A673 (cell line): ENCODE measurements at regions of chr2 and their contacts with region 1.

Region 1: GRCh38 chr2:74587664-74588277 is 33.3 kb downstream of the DOK1 start:
- DNase-seq: peak; percentile 79
- H3K4me3 ChIP-seq: no peak overlapping the region
- H3K27ac ChIP-seq: no peak overlapping the region
- H3K4me1 ChIP-seq: peaks cover 14% of the 10 kb centered on the region
- H3K27me3 ChIP-seq: no peaks in the 10 kb centered on the region
- CTCF ChIP-seq: peak; percentile 76

Region 2: DNA sequence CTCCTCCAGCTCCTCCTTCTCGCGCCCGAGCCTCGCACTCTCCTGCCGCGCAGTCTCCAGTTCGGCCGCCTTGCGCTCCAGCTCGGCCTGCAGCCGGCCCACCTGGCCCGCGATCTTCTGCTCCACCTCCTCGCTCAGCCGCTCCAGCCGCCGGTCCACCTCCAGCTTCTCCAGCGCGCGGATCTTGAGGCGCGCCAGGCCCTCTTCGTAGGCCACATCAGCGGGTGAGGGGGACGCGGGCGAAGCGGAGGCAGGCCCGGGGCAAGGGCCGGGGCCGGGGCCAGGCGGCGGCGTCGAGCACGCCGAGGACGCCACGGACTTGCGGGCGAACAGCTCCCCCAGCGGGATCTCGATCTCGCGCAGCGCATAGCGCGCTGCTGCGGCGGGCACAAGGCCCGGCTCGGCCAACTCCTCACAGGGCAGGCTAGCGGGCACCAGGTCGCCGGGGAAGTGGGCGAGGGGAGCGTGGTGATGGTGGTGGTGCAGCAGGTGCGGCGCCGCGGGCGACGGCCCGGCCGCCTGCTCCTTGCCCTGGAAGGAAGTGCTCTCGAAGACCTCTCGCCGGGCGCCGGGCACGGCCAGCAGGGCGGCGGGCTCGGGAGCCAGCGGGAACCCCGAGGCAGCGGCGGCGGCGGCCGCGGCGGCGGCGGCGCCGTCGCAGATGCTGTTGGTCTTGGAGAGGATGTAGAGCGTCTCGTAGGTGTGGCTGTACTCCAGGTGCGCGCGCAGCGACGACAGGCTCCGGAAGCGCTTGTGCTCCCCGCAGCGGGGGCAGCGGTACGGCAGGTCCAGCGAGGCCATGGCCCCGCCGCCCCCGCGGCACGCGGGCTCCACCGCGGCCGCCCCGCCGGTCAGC is 1318.7 kb before region 1 on chr2:
- CTCF ChIA-PET with region 1: no interaction called
- POLR2A ChIA-PET with region 1: no interaction called
- intact Hi-C with region 1: no loop called
- DNase-seq: no peak
- H3K4me3 ChIP-seq: no peak overlapping the region
- H3K27ac ChIP-seq: no peak overlapping the region
- H3K4me1 ChIP-seq: no peaks in the 10 kb centered on the region
- H3K27me3 ChIP-seq: no peaks in the 10 kb centered on the region
- CTCF ChIP-seq: no peak

Region 3: GRCh38 chr2:74250189-74250631 is 337.6 kb before region 1 on chr2:
- CTCF ChIA-PET with region 1: no interaction called
- POLR2A ChIA-PET with region 1: no interaction called
- intact Hi-C with region 1: loop called (anchors 2 kb)
- DNase-seq: peak; percentile 47
- H3K4me3 ChIP-seq: no peak overlapping the region
- H3K27ac ChIP-seq: no peak overlapping the region
- H3K4me1 ChIP-seq: no peaks in the 10 kb centered on the region
- H3K27me3 ChIP-seq: no peaks in the 10 kb centered on the region
- CTCF ChIP-seq: peak; percentile 83

Region 4: GRCh38 chr2:74414881-74415761 is 172.7 kb before region 1 on chr2:
- CTCF ChIA-PET with region 1: no interaction called
- POLR2A ChIA-PET with region 1: no interaction called
- intact Hi-C with region 1: no loop called
- DNase-seq: no peak
- H3K4me3 ChIP-seq: peak overlapping the region; percentile 12
- H3K27ac ChIP-seq: no peak overlapping the region
- H3K4me1 ChIP-seq: no peaks in the 10 kb centered on the region
- H3K27me3 ChIP-seq: no peaks in the 10 kb centered on the region
- CTCF ChIP-seq: no peak

Region 5: DNA sequence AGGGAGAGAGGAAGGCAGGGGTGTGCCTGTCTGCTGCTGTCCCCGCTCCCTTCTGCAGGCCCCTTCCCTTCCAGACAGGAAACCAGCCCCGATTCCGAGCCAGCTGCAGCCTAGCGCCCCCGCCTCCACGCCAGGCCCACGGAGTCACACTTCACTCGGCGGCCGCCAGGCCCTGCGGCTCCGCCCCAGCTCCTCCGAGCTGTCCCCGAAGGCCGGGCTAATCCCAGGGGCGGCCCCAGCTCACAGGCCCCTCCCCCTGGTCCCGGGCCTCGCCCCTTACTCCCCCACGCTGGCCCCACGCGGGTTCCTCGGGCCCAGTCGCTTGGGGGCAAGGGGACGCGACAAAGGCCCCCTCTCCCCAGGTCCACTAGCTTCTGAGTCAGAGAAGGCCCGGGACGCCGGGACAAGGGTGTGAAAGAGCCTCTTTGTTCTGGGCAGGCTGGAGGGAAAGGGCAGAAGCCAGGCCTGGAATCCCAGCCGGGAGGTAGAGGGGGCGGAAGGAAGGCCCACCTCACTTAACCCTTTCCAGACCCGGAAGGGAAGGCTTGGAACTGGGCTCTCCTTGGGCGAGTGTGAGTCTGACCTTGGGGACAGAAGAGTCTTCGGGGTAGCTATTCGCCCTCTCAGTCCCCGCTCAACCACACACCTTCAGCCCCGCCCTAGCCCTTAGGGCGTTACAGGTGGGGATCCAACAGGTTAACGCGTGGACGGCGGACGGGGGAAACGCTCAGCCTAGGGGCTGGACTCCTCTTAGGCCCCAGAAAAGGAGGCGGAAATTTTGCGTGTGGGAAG is 147.2 kb before region 1 on chr2:
- CTCF ChIA-PET with region 1: no interaction called
- POLR2A ChIA-PET with region 1: no interaction called
- intact Hi-C with region 1: no loop called
- DNase-seq: peak; percentile 90
- H3K4me3 ChIP-seq: peak overlapping the region; percentile 65
- H3K27ac ChIP-seq: peak overlapping the region; percentile 80
- H3K4me1 ChIP-seq: peaks cover 51% of the 10 kb centered on the region
- H3K27me3 ChIP-seq: no peaks in the 10 kb centered on the region
- CTCF ChIP-seq: 0 out of 2 replicates have a peak, but pooled peaks have one; percentile 32

Region 6: GRCh38 chr2:74482801-74483674 is 104.7 kb before region 1 on chr2 and contains the starts of genes CCDC142 and TTC31:
- CTCF ChIA-PET with region 1: no interaction called
- POLR2A ChIA-PET with region 1: interaction called, 7 read pairs
- intact Hi-C with region 1: loop called (anchors 1 kb)
- DNase-seq: peak; percentile 97
- H3K4me3 ChIP-seq: peak within 1 kb of the TSS; percentile 84
- H3K27ac ChIP-seq: peak within 1 kb of the TSS; percentile 84
- H3K4me1 ChIP-seq: peaks cover 18% of the 10 kb centered on the region
- H3K27me3 ChIP-seq: no peaks in the 10 kb centered on the region
- CTCF ChIP-seq: peak; percentile 97
- total RNA-seq, gene CCDC142: 20.4 and 27.4 TPM in 2 replicates
- total RNA-seq, gene TTC31: 25.8 and 28.6 TPM in 2 replicates